ENCODE measurements at regions of chr19 and their contacts with region 1.

Region 1: GRCh38 chr19:16041299-16041990 is 34.9 kb upstream of the TPM4 start:
- DNase-seq: peak; percentile 83
- H3K4me3 Mint-ChIP-seq: peak overlapping the region; percentile 21
- H3K27ac Mint-ChIP-seq: no peak overlapping the region
- H3K4me1 Mint-ChIP-seq: peaks cover 11% of the 10 kb centered on the region
- H3K27me3 Mint-ChIP-seq: no peaks in the 10 kb centered on the region

Region 2: GRCh38 chr19:15629003-15629880 is 412.2 kb before region 1 on chr19:
- CTCF ChIA-PET with region 1: no interaction called
- intact Hi-C with region 1: loop called (anchors 10 kb)
- DNase-seq: peak; percentile 93
- H3K4me3 Mint-ChIP-seq: no peak overlapping the region
- H3K27ac Mint-ChIP-seq: no peak overlapping the region
- H3K4me1 Mint-ChIP-seq: no peaks in the 10 kb centered on the region
- H3K27me3 Mint-ChIP-seq: peaks cover 6% of the 10 kb centered on the region

Region 3: DNA sequence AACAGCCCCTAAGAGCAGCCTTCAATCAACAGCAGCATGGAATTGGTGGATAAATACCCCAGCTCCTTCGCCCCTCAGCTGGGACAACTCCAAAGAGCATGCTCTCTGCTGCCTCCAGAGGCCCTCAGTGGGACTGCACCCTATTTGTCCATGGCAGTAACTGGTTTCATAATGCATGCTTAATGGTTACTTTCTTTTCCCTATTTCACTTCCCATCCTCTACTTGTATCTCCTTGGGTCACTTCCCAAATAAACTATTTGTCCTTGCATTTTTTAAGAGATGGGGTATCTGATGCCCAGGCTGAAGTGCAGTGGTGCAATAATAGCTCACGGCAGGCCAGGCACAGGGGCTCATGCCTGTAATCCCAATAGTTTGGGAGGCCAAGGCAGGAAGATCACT is 21.3 kb after region 1 on chr19:
- CTCF ChIA-PET with region 1: interaction called, 12 read pairs
- intact Hi-C with region 1: no loop called
- DNase-seq: peak; percentile 84
- H3K4me3 Mint-ChIP-seq: no peak overlapping the region
- H3K27ac Mint-ChIP-seq: no peak overlapping the region
- H3K4me1 Mint-ChIP-seq: peaks cover 20% of the 10 kb centered on the region
- H3K27me3 Mint-ChIP-seq: no peaks in the 10 kb centered on the region

Region 4: DNA sequence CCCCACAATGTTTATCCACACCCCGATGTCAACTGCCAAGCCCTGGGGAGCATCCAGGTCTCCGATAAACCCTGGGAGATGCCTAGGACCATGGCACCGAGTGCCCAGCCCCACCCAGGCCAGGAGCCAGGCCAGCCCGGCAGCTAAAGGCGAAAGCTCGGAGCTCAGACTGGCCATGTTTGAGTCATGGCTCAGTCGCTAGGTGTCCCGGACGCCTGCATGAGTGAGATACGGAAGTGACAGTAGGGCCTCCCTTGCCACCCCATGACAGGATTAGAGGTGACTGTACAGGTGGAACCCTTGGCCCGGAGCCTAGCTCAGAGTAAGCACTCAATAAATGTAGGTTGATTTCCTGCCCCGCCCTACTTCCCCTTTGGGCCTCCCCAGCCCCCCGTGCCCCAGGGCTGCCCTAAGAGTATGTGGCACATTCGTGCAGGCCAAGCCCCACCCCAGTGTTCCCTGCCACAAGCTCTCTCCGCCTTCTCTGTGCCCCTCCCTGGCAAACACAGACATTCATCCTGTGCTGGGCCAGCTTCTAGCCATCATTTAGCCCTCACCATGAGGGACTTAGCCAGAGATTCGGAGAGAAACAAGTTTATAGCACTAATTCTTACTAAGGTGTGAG is 29.0 kb after region 1 on chr19:
- CTCF ChIA-PET with region 1: interaction called, 11 read pairs
- intact Hi-C with region 1: no loop called
- DNase-seq: peak; percentile 96
- H3K4me3 Mint-ChIP-seq: no peak overlapping the region
- H3K27ac Mint-ChIP-seq: no peak overlapping the region
- H3K4me1 Mint-ChIP-seq: peaks cover 38% of the 10 kb centered on the region
- H3K27me3 Mint-ChIP-seq: no peaks in the 10 kb centered on the region

Region 5: DNA sequence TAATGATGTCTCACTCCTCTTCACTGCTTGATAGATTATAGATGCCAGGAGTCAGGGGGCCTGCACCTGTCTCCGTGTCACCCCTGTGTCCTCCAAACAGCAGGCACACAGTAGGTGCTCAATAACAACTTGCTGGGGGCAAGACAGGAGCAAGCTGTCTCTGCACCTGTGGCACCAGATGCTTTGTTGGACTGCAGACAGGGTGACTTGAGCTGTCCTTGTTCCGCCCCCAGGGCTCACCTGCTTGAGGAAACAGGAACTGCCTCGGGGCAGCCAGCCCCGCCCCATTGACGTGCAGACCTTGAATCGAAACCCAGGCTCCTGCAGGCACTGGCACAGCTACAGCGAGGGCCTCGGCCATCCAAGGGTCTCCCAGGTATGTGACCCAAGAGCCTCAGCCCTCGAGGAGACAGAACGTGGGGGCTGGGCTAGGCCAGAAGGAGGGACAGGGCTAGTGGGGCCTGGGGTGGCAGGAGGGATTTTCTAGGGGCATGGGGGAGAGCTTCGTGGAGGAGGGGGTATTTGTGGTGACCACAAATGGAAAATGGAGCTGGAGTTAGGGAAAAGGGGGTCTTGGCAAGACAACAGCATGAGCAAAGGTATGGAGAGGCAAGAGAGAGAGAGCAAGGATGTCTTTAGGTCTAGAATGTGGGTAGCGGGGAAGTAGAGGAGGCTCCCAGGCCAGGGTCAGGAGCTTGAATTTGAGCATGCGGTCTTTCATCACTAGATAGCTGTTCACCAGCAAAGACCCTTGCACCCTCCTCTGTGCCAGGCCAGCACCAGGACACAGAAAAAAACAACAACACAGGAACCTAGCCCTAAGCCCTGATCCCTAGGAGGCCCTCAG is 102.2 kb after region 1 on chr19 and contains the start of gene HSH2D:
- CTCF ChIA-PET with region 1: interaction called, 13 read pairs
- intact Hi-C with region 1: no loop called
- DNase-seq: peak; percentile 90
- H3K4me3 Mint-ChIP-seq: peak within 1 kb of the TSS; percentile 98
- H3K27ac Mint-ChIP-seq: peak within 1 kb of the TSS; percentile 96
- H3K4me1 Mint-ChIP-seq: peaks cover 25% of the 10 kb centered on the region
- H3K27me3 Mint-ChIP-seq: no peaks in the 10 kb centered on the region
- total RNA-seq, gene HSH2D: 18.3 to 20.7 TPM

Region 6: GRCh38 chr19:16197622-16198369 is 156.4 kb after region 1 on chr19 and contains the start of gene AP1M1:
- CTCF ChIA-PET with region 1: no interaction called
- intact Hi-C with region 1: no loop called
- DNase-seq: peak; percentile 99
- H3K4me3 Mint-ChIP-seq: peak within 1 kb of the TSS; percentile 93
- H3K27ac Mint-ChIP-seq: peak within 1 kb of the TSS; percentile 93
- H3K4me1 Mint-ChIP-seq: peaks cover 37% of the 10 kb centered on the region
- H3K27me3 Mint-ChIP-seq: no peaks in the 10 kb centered on the region
- total RNA-seq, gene AP1M1: 113 to 123 TPM

Region 7: DNA sequence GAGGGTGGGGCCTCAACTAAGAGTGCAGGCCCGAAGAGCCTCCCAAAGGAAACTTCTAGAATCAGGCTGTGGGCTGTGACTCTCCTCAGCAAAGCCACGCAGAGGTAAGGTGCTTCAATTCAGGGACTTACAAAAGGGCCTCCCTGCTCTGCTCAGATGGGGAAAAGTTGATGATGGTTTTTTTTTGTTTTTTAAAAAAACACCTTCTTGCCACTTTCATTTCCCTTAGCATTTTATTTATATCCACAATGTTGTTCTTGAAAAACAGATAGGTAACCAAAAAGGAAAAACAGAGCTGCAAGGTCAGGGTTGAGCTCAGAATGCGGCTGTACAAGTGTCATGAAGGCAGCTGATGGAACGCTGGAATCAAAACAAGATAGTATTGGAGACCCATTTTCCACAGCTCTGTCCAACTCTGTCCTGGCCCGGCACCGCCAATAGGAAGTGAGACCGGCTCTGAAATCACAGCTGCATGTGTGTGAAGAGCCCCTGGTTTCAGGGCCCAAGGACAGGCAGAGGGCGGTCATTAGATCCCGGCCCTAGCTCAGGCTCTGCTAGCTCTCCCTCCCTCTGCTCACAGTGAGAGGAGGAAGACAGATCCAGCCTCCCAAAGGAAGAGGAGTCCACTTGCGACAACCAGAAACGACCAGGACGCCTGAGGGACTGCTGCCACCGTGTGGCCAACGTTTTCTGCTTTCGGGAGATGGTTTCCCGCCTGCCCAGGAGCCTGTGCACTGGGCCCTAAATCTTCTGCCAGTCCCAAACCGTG is 341.5 kb after region 1 on chr19:
- CTCF ChIA-PET with region 1: interaction called, 4 read pairs
- intact Hi-C with region 1: loop called (anchors 2 kb)
- DNase-seq: peak; percentile 89
- H3K4me3 Mint-ChIP-seq: no peak overlapping the region
- H3K27ac Mint-ChIP-seq: no peak overlapping the region
- H3K4me1 Mint-ChIP-seq: peaks cover 45% of the 10 kb centered on the region
- H3K27me3 Mint-ChIP-seq: no peaks in the 10 kb centered on the region